ENCODE measurements at regions of chr1 and their contacts with region 1.

Region 1: DNA sequence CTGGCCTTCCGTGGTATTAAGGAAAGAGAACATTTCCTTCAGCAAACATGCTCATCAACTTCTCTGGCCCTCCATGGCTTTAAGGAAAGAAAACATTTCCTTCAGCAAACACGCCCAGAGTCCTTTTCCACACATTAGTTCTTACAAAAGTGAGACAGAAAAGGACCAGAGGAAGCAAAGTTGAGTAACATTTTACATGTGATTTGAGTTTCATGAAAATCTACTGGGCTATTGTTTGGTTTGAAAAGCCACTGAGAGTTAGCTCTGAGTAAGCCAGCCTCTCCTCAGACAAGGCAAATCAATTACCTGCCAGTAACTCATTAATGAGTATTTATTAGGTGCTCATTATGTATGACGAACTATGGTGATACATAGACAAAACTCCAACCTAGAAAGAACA is 78.0 kb downstream of the NID1 start:
- DNase-seq: no peak
- H3K4me3 ChIP-seq: no peak overlapping the region
- H3K27ac ChIP-seq: peak overlapping the region in 1 of 2 donors; percentile 39
- H3K4me1 ChIP-seq: peaks cover 4 to 29% of the 10 kb centered on the region in 2 donors
- H3K27me3 ChIP-seq: no peaks in the 10 kb centered on the region
- CTCF ChIP-seq: no peak

Region 2: GRCh38 chr1:236009857-236010256 is 23.0 kb after region 1 on chr1:
- intact Hi-C with region 1: no loop called
- DNase-seq: no peak
- H3K4me3 ChIP-seq: no peak overlapping the region
- H3K27ac ChIP-seq: peak overlapping the region in 1 of 2 donors; percentile 56
- H3K4me1 ChIP-seq: no peaks in the 10 kb centered on the region
- H3K27me3 ChIP-seq: no peaks in the 10 kb centered on the region
- CTCF ChIP-seq: no peak

Region 3: DNA sequence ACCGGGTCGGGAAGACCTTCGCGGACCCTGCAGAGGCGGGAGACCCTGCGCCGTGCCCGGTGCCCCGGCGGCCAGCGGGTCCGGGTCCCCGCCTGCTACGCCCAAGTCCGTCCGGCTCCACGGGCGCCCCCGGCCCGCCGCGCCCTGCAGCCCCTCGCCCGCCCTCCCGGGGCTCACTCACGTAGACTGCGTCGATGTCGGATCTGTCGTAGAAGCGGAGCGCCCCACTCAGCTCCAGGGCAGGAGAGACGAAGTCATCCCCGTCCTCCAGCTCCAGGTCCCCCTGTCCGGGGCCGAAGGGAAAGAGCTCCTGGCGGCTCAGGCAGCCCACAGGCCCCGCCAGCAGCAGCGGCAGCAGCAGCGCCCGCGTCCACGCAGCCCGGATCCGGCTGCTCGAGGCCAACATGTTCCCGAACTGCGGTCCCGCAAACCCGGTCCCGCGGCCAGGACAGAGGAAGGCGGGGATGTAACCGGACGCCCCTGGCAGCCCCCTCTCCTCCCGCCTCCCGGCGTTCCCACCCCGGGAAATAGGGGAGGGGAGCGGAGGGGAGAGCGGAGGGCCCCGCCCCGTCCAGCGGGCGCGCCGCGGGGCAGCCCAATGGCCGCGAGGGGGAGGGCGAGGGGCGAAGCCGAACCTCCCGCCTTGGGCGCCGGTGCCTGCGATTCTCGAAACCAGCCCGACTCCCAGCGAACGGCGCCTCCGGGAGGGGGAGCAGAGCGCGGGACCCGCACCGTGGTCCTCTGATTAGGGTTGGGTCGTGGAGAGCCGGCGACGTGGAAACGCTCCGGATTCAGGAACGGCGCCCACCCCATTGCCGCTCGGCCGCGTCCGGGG is 78.0 kb after region 1 on chr1 and contains the start of gene NID1:
- intact Hi-C with region 1: loop called (anchors 2 kb)
- DNase-seq: peak; percentile 56 to 92
- H3K4me3 ChIP-seq: peak within 1 kb of the TSS; percentile 77 to 81
- H3K27ac ChIP-seq: peak within 1 kb of the TSS; percentile 91 to 95
- H3K4me1 ChIP-seq: peaks cover 0 to 15% of the 10 kb centered on the region in 2 donors
- H3K27me3 ChIP-seq: no peaks in the 10 kb centered on the region
- CTCF ChIP-seq: peak; percentile 35 to 48 (median 38)
- total RNA-seq, gene NID1: 172 TPM

Measured in ascending aorta (tissue), 2 donors.